Activated naive CD4-positive, alpha-beta T cell treated with anti-CD3 and anti-CD28 coated beads for 36 hours (primary cell): ENCODE measurements at regions of chr4 and their contacts with region 1.

Region 1: DNA sequence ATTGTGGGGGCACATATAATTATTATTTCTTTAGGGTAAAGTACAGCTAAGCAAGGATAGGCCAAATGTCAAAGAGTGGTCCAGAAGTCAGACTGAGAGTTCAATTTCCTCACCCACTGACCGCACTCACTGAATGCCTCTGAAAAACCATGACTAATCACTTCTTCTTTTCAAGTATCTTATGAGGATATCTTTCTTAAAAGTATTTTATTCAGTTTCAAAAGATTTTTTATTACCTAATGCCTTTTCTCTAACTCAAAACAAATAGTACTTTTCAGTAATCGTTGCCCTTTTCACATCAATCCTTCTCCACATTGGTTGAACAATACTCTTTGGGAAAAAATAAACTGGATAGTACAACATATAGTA is 61.7 kb upstream of the CAMK2D start:
- DNase-seq: no peak
- H3K4me3 Mint-ChIP-seq: no peak overlapping the region
- H3K27ac Mint-ChIP-seq: no peak overlapping the region
- H3K4me1 Mint-ChIP-seq: peaks cover 66% of the 10 kb centered on the region
- H3K27me3 Mint-ChIP-seq: no peaks in the 10 kb centered on the region

Region 2: DNA sequence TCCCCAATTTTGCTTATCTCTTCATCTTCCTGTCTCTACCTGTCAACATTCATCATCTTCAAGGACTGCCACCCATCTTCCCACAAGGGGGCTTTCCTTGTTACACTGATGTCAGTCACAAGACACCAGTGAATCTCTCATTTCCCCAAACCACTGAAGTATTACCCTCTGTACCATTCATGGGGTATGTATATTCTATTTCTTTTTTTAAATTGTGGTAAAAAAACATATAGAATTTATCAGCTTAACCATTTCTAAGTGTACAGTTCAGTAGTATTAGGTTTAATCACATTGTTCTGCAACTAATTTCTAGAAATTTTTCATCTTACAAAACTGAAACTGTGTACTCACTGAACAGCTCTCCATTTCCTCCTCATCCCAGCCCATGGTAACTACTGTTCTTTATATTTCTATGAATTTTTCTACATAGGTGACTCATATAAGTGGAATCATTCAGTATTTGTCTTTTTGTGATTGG is 1087.8 kb before region 1 on chr4:
- CTCF ChIA-PET with region 1: no interaction called
- intact Hi-C with region 1: loop called (anchors 10 kb)
- DNase-seq: peak; percentile 21
- H3K4me3 Mint-ChIP-seq: no peak overlapping the region
- H3K27ac Mint-ChIP-seq: no peak overlapping the region
- H3K4me1 Mint-ChIP-seq: peaks cover 14% of the 10 kb centered on the region
- H3K27me3 Mint-ChIP-seq: no peaks in the 10 kb centered on the region

Region 3: GRCh38 chr4:113446019-113446418 is 377.3 kb before region 1 on chr4:
- CTCF ChIA-PET with region 1: no interaction called
- intact Hi-C with region 1: loop called (anchors 2 kb)
- DNase-seq: no peak
- H3K4me3 Mint-ChIP-seq: no peak overlapping the region
- H3K27ac Mint-ChIP-seq: peak overlapping the region; percentile 66
- H3K4me1 Mint-ChIP-seq: peaks cover 27% of the 10 kb centered on the region
- H3K27me3 Mint-ChIP-seq: no peaks in the 10 kb centered on the region

Region 4: GRCh38 chr4:113474017-113474416 is 349.3 kb before region 1 on chr4:
- CTCF ChIA-PET with region 1: no interaction called
- intact Hi-C with region 1: loop called (anchors 1 kb)
- DNase-seq: peak; percentile 55
- H3K4me3 Mint-ChIP-seq: no peak overlapping the region
- H3K27ac Mint-ChIP-seq: peak overlapping the region; percentile 84
- H3K4me1 Mint-ChIP-seq: peaks cover 56% of the 10 kb centered on the region
- H3K27me3 Mint-ChIP-seq: no peaks in the 10 kb centered on the region

Region 5: GRCh38 chr4:113725963-113726362 is 97.3 kb before region 1 on chr4:
- CTCF ChIA-PET with region 1: no interaction called
- intact Hi-C with region 1: no loop called
- DNase-seq: no peak
- H3K4me3 Mint-ChIP-seq: no peak overlapping the region
- H3K27ac Mint-ChIP-seq: no peak overlapping the region
- H3K4me1 Mint-ChIP-seq: peaks cover 56% of the 10 kb centered on the region
- H3K27me3 Mint-ChIP-seq: no peaks in the 10 kb centered on the region

Region 6: GRCh38 chr4:113781439-113782040 is 41.7 kb before region 1 on chr4:
- CTCF ChIA-PET with region 1: no interaction called
- intact Hi-C with region 1: loop called (anchors 2 kb)
- DNase-seq: no peak
- H3K4me3 Mint-ChIP-seq: no peak overlapping the region
- H3K27ac Mint-ChIP-seq: no peak overlapping the region
- H3K4me1 Mint-ChIP-seq: peaks cover 28% of the 10 kb centered on the region
- H3K27me3 Mint-ChIP-seq: no peaks in the 10 kb centered on the region

Region 7: DNA sequence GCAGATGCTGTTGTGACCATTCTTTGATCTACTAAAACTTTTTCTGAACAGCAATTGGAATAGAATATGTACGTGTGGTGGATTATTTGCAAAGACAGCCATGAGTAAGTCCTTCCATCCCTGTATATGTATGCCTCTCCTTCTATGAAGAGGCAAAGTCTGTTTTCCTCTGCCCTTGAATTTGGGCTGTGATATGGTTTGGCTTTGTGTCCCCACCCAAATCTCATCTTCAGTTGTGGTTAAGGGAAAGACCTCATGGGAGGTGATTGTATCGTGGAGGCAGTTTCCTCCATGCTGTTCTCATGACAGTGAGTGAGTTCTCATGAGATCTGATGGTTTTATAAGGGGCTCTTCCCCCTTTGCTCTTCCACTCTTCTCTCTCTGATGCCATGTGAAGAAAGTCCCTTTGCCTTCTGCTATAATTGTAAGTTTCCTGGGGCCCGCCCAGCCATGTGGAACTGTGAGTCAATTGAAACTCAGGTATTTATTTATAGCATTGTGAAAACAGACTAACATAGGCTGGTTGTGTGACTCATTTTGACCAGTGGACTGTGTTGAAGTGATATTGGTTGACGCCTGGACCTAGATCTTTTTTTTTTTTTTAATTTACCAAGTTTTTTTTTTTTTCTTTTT is 46.6 kb after region 1 on chr4:
- CTCF ChIA-PET with region 1: no interaction called
- intact Hi-C with region 1: loop called (anchors 2 kb)
- DNase-seq: peak; percentile 80
- H3K4me3 Mint-ChIP-seq: no peak overlapping the region
- H3K27ac Mint-ChIP-seq: peak overlapping the region; percentile 82
- H3K4me1 Mint-ChIP-seq: peaks cover 19% of the 10 kb centered on the region
- H3K27me3 Mint-ChIP-seq: no peaks in the 10 kb centered on the region

Region 8: DNA sequence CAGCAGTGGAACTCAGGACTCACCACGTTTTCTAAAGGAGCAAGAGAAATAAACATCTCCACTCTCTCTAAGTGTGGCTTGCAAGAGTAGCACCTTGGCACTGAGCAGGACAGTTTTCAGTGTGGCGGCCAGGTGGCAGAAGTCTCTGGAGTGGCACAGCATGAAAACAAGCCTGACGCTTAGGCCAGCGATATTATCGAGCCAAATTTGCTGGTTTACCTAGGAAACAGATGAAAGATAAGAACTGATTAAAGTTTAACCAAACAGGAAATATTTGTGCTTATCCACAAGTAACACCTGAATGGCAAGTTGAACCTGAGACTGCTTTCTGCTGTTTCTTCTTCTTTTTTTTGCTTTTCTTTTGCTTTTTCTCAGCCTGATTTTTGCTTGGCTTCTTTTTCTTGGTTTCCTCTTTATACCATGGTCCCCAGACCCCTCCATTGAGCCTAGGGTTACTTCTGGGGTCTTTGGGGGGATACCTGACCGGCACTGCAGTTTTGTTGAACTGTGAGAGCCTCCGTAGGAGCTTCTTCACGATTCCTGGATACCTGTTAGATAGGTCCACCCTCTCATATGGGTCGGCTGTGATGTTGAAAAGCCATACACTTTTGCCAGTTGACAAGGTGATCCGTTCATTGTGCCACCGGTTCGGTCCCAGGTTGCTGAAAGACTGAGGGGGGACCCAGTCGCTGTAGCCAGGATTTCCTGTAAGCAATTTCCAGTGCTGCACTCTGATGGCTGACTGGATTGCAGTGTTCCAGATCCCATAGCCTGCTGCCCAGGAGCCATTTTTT is 78.9 kb after region 1 on chr4:
- CTCF ChIA-PET with region 1: no interaction called
- intact Hi-C with region 1: loop called (anchors 1 kb)
- DNase-seq: peak; percentile 82
- H3K4me3 Mint-ChIP-seq: peak overlapping the region; percentile 65
- H3K27ac Mint-ChIP-seq: peak overlapping the region; percentile 82
- H3K4me1 Mint-ChIP-seq: peaks cover 58% of the 10 kb centered on the region
- H3K27me3 Mint-ChIP-seq: no peaks in the 10 kb centered on the region

Region 9: GRCh38 chr4:114509340-114509739 is 686.1 kb after region 1 on chr4:
- CTCF ChIA-PET with region 1: no interaction called
- intact Hi-C with region 1: no loop called
- DNase-seq: no peak
- H3K4me3 Mint-ChIP-seq: no peak overlapping the region
- H3K27ac Mint-ChIP-seq: no peak overlapping the region
- H3K4me1 Mint-ChIP-seq: no peaks in the 10 kb centered on the region
- H3K27me3 Mint-ChIP-seq: peaks cover 2% of the 10 kb centered on the region